CD4-positive, alpha-beta T cell (primary cell): ENCODE measurements at regions of chr12 and their contacts with region 1.

Region 1: DNA sequence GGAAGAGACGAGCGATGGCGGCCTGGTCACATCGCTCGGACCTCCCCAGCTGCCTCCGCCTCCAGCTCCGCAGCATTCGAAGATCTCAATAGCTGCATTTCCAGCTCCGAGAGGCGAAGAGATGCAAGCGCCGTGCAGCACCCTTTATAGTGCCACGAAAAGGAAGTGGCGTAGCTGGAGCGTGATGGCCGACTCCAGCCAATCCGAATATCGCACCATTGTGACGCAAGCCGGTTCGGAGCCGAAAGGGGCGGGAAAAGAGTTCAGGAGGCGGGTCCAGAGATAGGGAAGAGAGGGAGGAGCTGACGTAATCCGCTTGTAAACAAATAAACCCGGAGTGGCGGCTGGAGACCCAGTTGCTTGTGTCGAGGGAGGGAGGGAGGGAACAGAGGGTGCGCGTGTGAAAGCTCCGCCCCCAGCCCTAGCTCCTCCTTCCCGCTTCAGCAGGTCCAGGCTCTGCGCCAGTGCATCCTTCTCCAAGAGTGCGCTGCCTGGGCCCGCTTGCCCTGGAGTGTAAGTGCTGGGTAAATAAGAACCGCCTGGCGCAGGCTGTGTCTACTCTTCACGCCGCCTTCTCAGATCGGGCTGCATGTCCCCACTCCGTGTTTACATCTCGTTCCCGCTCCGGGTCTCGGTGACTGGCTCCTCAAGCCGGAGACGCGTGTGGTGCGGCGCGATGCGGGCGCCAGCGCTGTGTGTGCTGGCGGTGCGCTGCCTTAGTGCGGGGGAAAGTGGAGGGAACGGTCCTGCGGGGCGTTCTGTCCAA is at the start of gene BTG1:
- DNase-seq: peak; percentile 96 to 100 (median 98)
- ATAC-seq: peak; percentile 68
- H3K4me3 ChIP-seq: peak within 1 kb of the TSS; percentile 94
- H3K4me3 Mint-ChIP-seq: peak within 1 kb of the TSS; percentile 100
- H3K27ac ChIP-seq: peak within 1 kb of the TSS; percentile 88 to 98
- H3K27ac Mint-ChIP-seq: peak within 1 kb of the TSS; percentile 99
- H3K4me1 ChIP-seq: peaks cover 4% of the 10 kb centered on the region
- H3K4me1 Mint-ChIP-seq: peaks cover 39% of the 10 kb centered on the region
- H3K27me3 ChIP-seq: no peaks in the 10 kb centered on the region
- H3K27me3 Mint-ChIP-seq: peaks cover 15% of the 10 kb centered on the region
- CTCF ChIP-seq: no peak
- total RNA-seq, gene BTG1: 1,698 to 1,774 TPM

Region 2: DNA sequence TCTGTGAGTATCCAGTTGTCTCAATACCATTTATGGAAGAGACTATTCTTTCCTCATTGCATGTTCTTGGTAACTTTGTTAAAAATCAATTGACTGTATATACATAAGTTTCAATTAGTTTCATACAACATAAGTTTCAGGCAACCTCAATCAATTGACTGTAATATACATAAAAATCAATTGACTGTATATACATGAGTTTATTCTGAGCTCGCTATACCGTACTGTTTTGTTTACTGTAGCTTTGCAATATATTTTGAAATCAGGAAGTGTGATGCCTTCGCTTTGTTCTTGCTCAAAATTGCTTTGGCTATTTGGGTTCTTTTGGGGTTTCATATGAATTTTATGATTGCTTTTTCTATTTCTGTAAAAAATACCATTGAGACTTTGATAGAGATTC is 392.3 kb before region 1 on chr12:
- CTCF ChIA-PET with region 1: no interaction called
- POLR2A ChIA-PET with region 1: interaction called, 19 read pairs
- intact Hi-C with region 1: no loop called
- DNase-seq: no peak
- ATAC-seq: no peak
- H3K4me3 ChIP-seq: no peak overlapping the region
- H3K4me3 Mint-ChIP-seq: no peak overlapping the region
- H3K27ac ChIP-seq: no peak overlapping the region
- H3K27ac Mint-ChIP-seq: no peak overlapping the region
- H3K4me1 ChIP-seq: no peaks in the 10 kb centered on the region
- H3K4me1 Mint-ChIP-seq: no peaks in the 10 kb centered on the region
- H3K27me3 ChIP-seq: no peaks in the 10 kb centered on the region
- H3K27me3 Mint-ChIP-seq: no peaks in the 10 kb centered on the region
- CTCF ChIP-seq: no peak

Region 3: DNA sequence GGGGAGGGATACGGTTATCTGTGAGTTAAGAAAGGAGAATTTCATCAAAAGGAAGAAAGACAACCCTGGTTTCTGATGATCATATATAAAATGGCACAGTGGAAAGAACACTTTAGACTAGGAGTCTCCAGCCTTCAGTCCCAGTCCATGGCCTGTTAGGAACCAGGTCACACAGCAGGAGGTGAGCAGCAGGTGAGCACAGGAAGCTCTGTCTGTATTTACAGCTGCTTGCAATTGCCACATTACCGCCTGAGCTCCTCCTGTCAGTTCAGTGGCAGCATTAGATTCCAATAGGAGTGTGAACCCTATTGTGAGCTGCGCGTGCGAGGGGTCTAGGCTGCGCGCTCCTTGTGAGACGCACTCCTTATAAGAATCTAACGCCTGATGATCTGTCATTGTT is 138.1 kb before region 1 on chr12:
- CTCF ChIA-PET with region 1: interaction called, 4 read pairs
- POLR2A ChIA-PET with region 1: interaction called, 35 read pairs
- intact Hi-C with region 1: no loop called
- DNase-seq: peak in 2 of 14 experiments; percentile 32 to 34
- ATAC-seq: peak; percentile 35
- H3K4me3 ChIP-seq: no peak overlapping the region
- H3K4me3 Mint-ChIP-seq: no peak overlapping the region
- H3K27ac ChIP-seq: no peak overlapping the region
- H3K27ac Mint-ChIP-seq: peak overlapping the region; percentile 12
- H3K4me1 ChIP-seq: peaks cover 12% of the 10 kb centered on the region
- H3K4me1 Mint-ChIP-seq: peaks cover 91% of the 10 kb centered on the region
- H3K27me3 ChIP-seq: no peaks in the 10 kb centered on the region
- H3K27me3 Mint-ChIP-seq: no peaks in the 10 kb centered on the region
- CTCF ChIP-seq: no peak

Region 4: GRCh38 chr12:92114834-92115233 is 31.1 kb before region 1 on chr12:
- CTCF ChIA-PET with region 1: interaction called, 6 read pairs
- POLR2A ChIA-PET with region 1: interaction called, 12 read pairs
- intact Hi-C with region 1: no loop called
- DNase-seq: no peak
- ATAC-seq: no peak
- H3K4me3 ChIP-seq: no peak overlapping the region
- H3K4me3 Mint-ChIP-seq: peak overlapping the region; percentile 70
- H3K27ac ChIP-seq: no peak overlapping the region
- H3K27ac Mint-ChIP-seq: peak overlapping the region; percentile 61
- H3K4me1 ChIP-seq: peaks cover 6% of the 10 kb centered on the region
- H3K4me1 Mint-ChIP-seq: peaks cover 68% of the 10 kb centered on the region
- H3K27me3 ChIP-seq: no peaks in the 10 kb centered on the region
- H3K27me3 Mint-ChIP-seq: no peaks in the 10 kb centered on the region
- CTCF ChIP-seq: no peak

Region 5: DNA sequence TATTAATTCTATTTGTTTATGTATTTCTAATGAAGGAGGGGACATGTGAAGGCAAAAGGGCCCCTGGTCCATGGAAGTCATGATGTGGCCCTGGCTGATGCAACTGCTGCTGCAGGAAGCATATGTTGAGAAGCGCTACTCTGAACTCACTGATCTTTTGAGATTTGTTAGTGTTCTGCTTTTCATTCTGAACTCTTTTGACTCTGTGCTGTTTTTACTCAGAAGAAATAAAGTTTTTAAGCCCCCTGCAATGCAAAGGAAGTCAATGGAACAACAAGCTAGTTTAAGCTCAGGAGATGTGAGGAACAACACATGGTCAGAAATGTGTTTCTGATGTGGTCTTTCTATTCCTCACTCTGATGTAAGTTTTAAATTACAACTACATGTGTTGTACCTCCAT is 88.6 kb after region 1 on chr12:
- CTCF ChIA-PET with region 1: no interaction called
- POLR2A ChIA-PET with region 1: interaction called, 21 read pairs
- intact Hi-C with region 1: no loop called
- DNase-seq: peak in 4 of 14 experiments; percentile 15 to 33 (median 20)
- ATAC-seq: peak; percentile 43
- H3K4me3 ChIP-seq: no peak overlapping the region
- H3K4me3 Mint-ChIP-seq: peak overlapping the region; percentile 18
- H3K27ac ChIP-seq: no peak overlapping the region
- H3K27ac Mint-ChIP-seq: peak overlapping the region; percentile 76
- H3K4me1 ChIP-seq: peaks cover 3% of the 10 kb centered on the region
- H3K4me1 Mint-ChIP-seq: peaks cover 40% of the 10 kb centered on the region
- H3K27me3 ChIP-seq: no peaks in the 10 kb centered on the region
- H3K27me3 Mint-ChIP-seq: no peaks in the 10 kb centered on the region
- CTCF ChIP-seq: no peak

Region 6: GRCh38 chr12:92378682-92379479 is 233.0 kb after region 1 on chr12:
- CTCF ChIA-PET with region 1: no interaction called
- POLR2A ChIA-PET with region 1: interaction called, 32 read pairs
- intact Hi-C with region 1: no loop called
- DNase-seq: peak in 6 of 14 experiments; percentile 21 to 62 (median 48)
- ATAC-seq: peak; percentile 93
- H3K4me3 ChIP-seq: no peak overlapping the region
- H3K4me3 Mint-ChIP-seq: peak overlapping the region; percentile 14
- H3K27ac ChIP-seq: peak overlapping the region; percentile 26 to 66
- H3K27ac Mint-ChIP-seq: peak overlapping the region; percentile 84
- H3K4me1 ChIP-seq: peaks cover 26% of the 10 kb centered on the region
- H3K4me1 Mint-ChIP-seq: peaks cover 84% of the 10 kb centered on the region
- H3K27me3 ChIP-seq: no peaks in the 10 kb centered on the region
- H3K27me3 Mint-ChIP-seq: no peaks in the 10 kb centered on the region
- CTCF ChIP-seq: no peak

Region 7: GRCh38 chr12:92593734-92594402 is 448.0 kb after region 1 on chr12:
- CTCF ChIA-PET with region 1: interaction called, 4 read pairs
- POLR2A ChIA-PET with region 1: interaction called, 42 read pairs
- intact Hi-C with region 1: loop called in 1 of 2 experiments (anchors 2 kb)
- DNase-seq: peak; percentile 59 to 98 (median 72)
- ATAC-seq: peak; percentile 84
- H3K4me3 ChIP-seq: no peak overlapping the region
- H3K4me3 Mint-ChIP-seq: peak overlapping the region; percentile 28
- H3K27ac ChIP-seq: peak overlapping the region; percentile 96 to 97
- H3K27ac Mint-ChIP-seq: peak overlapping the region; percentile 91
- H3K4me1 ChIP-seq: peaks cover 31% of the 10 kb centered on the region
- H3K4me1 Mint-ChIP-seq: peaks cover 43% of the 10 kb centered on the region
- H3K27me3 ChIP-seq: no peaks in the 10 kb centered on the region
- H3K27me3 Mint-ChIP-seq: no peaks in the 10 kb centered on the region
- CTCF ChIP-seq: no peak